CD4-positive, alpha-beta memory T cell (primary cell): ENCODE measurements at regions of chr9 and their contacts with region 1.

Region 1: GRCh38 chr9:129460323-129461261 is 160.3 kb downstream of the C9orf50 start:
- DNase-seq: peak; percentile 80 to 94 (median 84)
- H3K4me3 ChIP-seq: peak overlapping the region in 1 of 2 donors; percentile 47
- H3K4me3 Mint-ChIP-seq: peak overlapping the region; percentile 68 to 81 (median 76)
- H3K27ac ChIP-seq: peak overlapping the region; percentile 84
- H3K27ac Mint-ChIP-seq: peak overlapping the region; percentile 87 to 96 (median 93)
- H3K4me1 ChIP-seq: peaks cover 54% of the 10 kb centered on the region
- H3K4me1 Mint-ChIP-seq: peaks cover 29 to 53% (median 42%) of the 10 kb centered on the region in 4 donors
- H3K27me3 ChIP-seq: no peaks in the 10 kb centered on the region
- H3K27me3 Mint-ChIP-seq: no peaks in the 10 kb centered on the region

Region 2: GRCh38 chr9:128927731-128928411 is 532.7 kb before region 1 on chr9:
- CTCF ChIA-PET with region 1: no interaction called
- POLR2A ChIA-PET with region 1: no interaction called
- intact Hi-C with region 1: no loop called
- DNase-seq: peak in 4 of 5 donors; percentile 44 to 61 (median 49)
- H3K4me3 ChIP-seq: no peak overlapping the region
- H3K4me3 Mint-ChIP-seq: no peak overlapping the region
- H3K27ac ChIP-seq: no peak overlapping the region
- H3K27ac Mint-ChIP-seq: peak overlapping the region in 4 of 7 donors; percentile 5 to 60 (median 20)
- H3K4me1 ChIP-seq: peaks cover 8% of the 10 kb centered on the region
- H3K4me1 Mint-ChIP-seq: peaks cover 4 to 13% (median 11%) of the 10 kb centered on the region in 4 donors
- H3K27me3 ChIP-seq: no peaks in the 10 kb centered on the region
- H3K27me3 Mint-ChIP-seq: no peaks in the 10 kb centered on the region

Region 3: GRCh38 chr9:129183496-129184218 is 276.9 kb before region 1 on chr9:
- CTCF ChIA-PET with region 1: no interaction called
- POLR2A ChIA-PET with region 1: no interaction called
- intact Hi-C with region 1: no loop called
- DNase-seq: no peak
- H3K4me3 ChIP-seq: no peak overlapping the region
- H3K4me3 Mint-ChIP-seq: peak overlapping the region in 1 of 8 donors; percentile 16
- H3K27ac ChIP-seq: no peak overlapping the region
- H3K27ac Mint-ChIP-seq: no peak overlapping the region
- H3K4me1 ChIP-seq: peaks cover 8% of the 10 kb centered on the region
- H3K4me1 Mint-ChIP-seq: peaks cover 7 to 13% (median 8%) of the 10 kb centered on the region in 4 donors
- H3K27me3 ChIP-seq: no peaks in the 10 kb centered on the region
- H3K27me3 Mint-ChIP-seq: no peaks in the 10 kb centered on the region

Region 4: DNA sequence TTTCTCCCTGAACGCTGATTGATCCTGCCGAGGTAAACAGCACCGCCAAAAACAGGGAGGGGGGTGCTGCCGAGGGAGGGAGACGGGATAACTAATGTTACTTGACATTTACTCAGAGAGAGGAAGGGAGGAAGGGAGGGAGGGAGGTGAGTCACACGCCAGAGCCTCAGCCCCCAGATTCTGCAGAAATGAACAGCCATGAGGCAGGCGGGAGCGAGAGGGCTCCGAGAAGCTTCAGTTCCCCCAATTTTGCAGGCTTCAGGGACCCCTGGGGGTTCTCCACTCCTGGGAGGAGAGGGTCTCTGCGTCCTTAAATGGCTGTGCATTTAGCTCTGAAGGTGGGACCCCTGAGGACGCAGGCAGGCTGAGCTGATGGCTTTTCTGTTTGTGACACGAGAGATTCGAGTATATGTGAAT is 223.4 kb before region 1 on chr9:
- CTCF ChIA-PET with region 1: no interaction called
- POLR2A ChIA-PET with region 1: interaction called, 10 read pairs
- intact Hi-C with region 1: no loop called
- DNase-seq: peak in 2 of 5 donors; percentile 18 to 66
- H3K4me3 ChIP-seq: peak overlapping the region in 1 of 2 donors; percentile 47
- H3K4me3 Mint-ChIP-seq: peak overlapping the region; percentile 76 to 88 (median 86)
- H3K27ac ChIP-seq: peak overlapping the region; percentile 29
- H3K27ac Mint-ChIP-seq: peak overlapping the region; percentile 88 to 96 (median 93)
- H3K4me1 ChIP-seq: peaks cover 52% of the 10 kb centered on the region
- H3K4me1 Mint-ChIP-seq: peaks cover 39 to 63% (median 51%) of the 10 kb centered on the region in 4 donors
- H3K27me3 ChIP-seq: no peaks in the 10 kb centered on the region
- H3K27me3 Mint-ChIP-seq: no peaks in the 10 kb centered on the region

Region 5: GRCh38 chr9:129383561-129384416 is 76.8 kb before region 1 on chr9:
- CTCF ChIA-PET with region 1: no interaction called
- POLR2A ChIA-PET with region 1: interaction called, 32 read pairs
- intact Hi-C with region 1: no loop called
- DNase-seq: peak; percentile 74 to 84 (median 77)
- H3K4me3 ChIP-seq: peak overlapping the region; percentile 14 to 56
- H3K4me3 Mint-ChIP-seq: peak overlapping the region; percentile 76 to 83 (median 78)
- H3K27ac ChIP-seq: peak overlapping the region; percentile 42
- H3K27ac Mint-ChIP-seq: peak overlapping the region; percentile 10 to 95 (median 90)
- H3K4me1 ChIP-seq: peaks cover 11% of the 10 kb centered on the region
- H3K4me1 Mint-ChIP-seq: peaks cover 0 to 13% (median 4%) of the 10 kb centered on the region in 4 donors
- H3K27me3 ChIP-seq: no peaks in the 10 kb centered on the region
- H3K27me3 Mint-ChIP-seq: no peaks in the 10 kb centered on the region

Region 6: DNA sequence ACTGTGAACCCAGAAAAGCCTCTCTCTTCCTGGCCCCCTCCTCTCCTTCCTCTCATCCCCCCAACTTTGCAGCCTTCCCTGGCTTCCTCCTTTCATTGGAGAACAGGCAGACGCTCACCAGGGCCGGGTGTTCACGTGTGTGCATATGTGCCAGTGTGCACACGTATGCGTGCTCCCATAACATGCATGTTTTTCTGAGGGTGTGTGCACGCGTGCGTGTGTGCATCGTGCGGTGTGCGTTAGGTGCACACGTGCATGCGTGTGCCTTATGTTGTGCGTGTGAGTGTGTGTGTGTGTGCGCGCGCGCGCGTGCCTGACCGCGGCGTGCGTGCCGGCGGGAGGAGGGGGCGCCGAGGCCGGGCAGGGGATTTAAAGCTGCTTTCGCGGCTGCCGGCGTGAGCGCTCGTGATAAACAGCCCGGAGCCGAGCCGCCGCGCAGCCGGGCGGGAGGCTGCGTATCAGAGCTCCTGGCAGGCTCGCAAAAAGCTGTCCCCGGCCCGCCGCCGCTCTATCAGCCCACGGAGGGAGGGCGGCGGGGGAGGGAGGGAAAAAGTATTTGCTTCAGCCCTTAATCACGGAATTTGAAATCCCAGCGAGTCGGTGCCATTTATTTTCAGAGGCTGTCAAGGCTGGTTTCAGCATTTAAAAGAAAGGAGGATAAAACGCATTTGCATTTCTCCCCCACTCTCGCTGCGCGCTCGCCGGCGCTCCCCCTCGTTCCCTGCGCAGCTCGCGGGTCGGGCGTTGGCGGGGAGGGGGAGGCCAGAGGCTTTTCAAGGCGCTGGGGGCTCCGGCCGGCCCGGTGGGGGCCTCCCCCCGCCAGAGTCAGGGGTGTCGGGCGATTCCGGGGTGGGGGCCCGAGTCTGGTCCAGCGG is 23.6 kb before region 1 on chr9:
- CTCF ChIA-PET with region 1: interaction called, 13 read pairs
- POLR2A ChIA-PET with region 1: interaction called, 56 read pairs
- intact Hi-C with region 1: loop called (anchors 1 kb)
- DNase-seq: peak in 4 of 5 donors; percentile 45 to 49 (median 48)
- H3K4me3 ChIP-seq: peak overlapping the region in 1 of 2 donors; percentile 45
- H3K4me3 Mint-ChIP-seq: peak overlapping the region; percentile 85 to 96 (median 89)
- H3K27ac ChIP-seq: no peak overlapping the region
- H3K27ac Mint-ChIP-seq: peak overlapping the region in 6 of 7 donors; percentile 5 to 87 (median 82)
- H3K4me1 ChIP-seq: peaks cover 20% of the 10 kb centered on the region
- H3K4me1 Mint-ChIP-seq: peaks cover 12 to 43% (median 22%) of the 10 kb centered on the region in 4 donors
- H3K27me3 ChIP-seq: peaks cover 19% of the 10 kb centered on the region
- H3K27me3 Mint-ChIP-seq: peaks cover 32 to 36% of the 10 kb centered on the region in 2 donors

Region 7: DNA sequence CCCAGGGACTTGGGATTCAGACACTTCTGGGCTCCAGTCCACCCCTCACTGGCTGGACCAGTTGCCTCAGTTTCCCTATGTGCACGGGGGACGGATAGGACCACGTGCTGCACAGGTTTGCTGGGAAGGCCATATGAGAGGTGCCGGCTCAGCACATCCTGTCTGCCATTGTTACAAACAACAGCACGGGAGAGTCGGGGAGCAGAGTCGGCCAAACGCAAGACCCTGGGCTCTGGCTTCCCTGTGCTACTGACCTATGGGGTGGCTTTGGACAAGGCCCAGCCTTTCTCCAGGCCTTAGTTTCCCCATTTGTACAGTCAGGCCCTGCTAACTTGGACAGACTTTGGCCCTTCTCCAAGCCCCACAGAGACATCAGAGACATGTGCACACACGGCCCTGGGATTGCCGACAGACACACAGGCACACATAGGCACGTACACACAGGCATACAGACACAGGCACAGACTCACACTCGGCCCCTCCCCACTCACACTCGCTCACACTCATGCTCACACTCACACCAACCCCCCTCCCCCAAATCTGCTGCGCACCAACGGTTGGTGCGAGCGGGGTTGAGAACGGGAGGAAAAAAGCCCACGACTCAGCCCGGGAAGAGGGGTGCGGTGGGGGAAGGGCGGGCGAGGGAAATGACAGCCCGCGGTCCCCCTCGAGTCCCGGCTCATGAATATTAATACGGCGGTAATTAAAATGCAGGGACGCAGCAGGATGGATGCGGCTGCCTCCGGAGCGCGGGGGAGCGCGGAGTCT is 27.2 kb after region 1 on chr9:
- CTCF ChIA-PET with region 1: interaction called, 4 read pairs
- POLR2A ChIA-PET with region 1: interaction called, 85 read pairs
- intact Hi-C with region 1: loop called (anchors 1 kb)
- DNase-seq: peak in 2 of 5 donors; percentile 50 to 73
- H3K4me3 ChIP-seq: peak overlapping the region; percentile 38 to 52
- H3K4me3 Mint-ChIP-seq: peak overlapping the region; percentile 87 to 93 (median 90)
- H3K27ac ChIP-seq: peak overlapping the region; percentile 91
- H3K27ac Mint-ChIP-seq: peak overlapping the region; percentile 93 to 100 (median 98)
- H3K4me1 ChIP-seq: peaks cover 65% of the 10 kb centered on the region
- H3K4me1 Mint-ChIP-seq: peaks cover 33 to 80% (median 54%) of the 10 kb centered on the region in 4 donors
- H3K27me3 ChIP-seq: no peaks in the 10 kb centered on the region
- H3K27me3 Mint-ChIP-seq: peaks cover 0 to 3% of the 10 kb centered on the region in 2 donors

Region 8: GRCh38 chr9:129569502-129570449 is 109.2 kb after region 1 on chr9:
- CTCF ChIA-PET with region 1: no interaction called
- POLR2A ChIA-PET with region 1: interaction called, 10 read pairs
- intact Hi-C with region 1: no loop called
- DNase-seq: no peak
- H3K4me3 ChIP-seq: no peak overlapping the region
- H3K4me3 Mint-ChIP-seq: peak overlapping the region; percentile 3 to 82 (median 76)
- H3K27ac ChIP-seq: no peak overlapping the region
- H3K27ac Mint-ChIP-seq: peak overlapping the region in 2 of 7 donors; percentile 15 to 77
- H3K4me1 ChIP-seq: peaks cover 20% of the 10 kb centered on the region
- H3K4me1 Mint-ChIP-seq: peaks cover 0 to 13% (median 9%) of the 10 kb centered on the region in 4 donors
- H3K27me3 ChIP-seq: peaks cover 15% of the 10 kb centered on the region
- H3K27me3 Mint-ChIP-seq: peaks cover 13 to 14% of the 10 kb centered on the region in 2 donors